Activated T-helper 2 cell treated with anti-CD3 and anti-CD28 coated beads, Interferon-gamma antibody, Interleukin-2, Interleukin-4, amounts not matched to agents 10 μg/mL and 5 μg/mL and 100 μg/mL, durations not matched to agents 14 hours and 24 hours and 36 hours (primary cell): ENCODE measurements at regions of chr5 and their contacts with region 1.

Region 1: GRCh38 chr5:40679155-40679913 is 381 bp upstream of the PTGER4 start:
- DNase-seq: peak; percentile 90
- H3K4me3 Mint-ChIP-seq: peak overlapping the region; percentile 99
- H3K27ac Mint-ChIP-seq: peak overlapping the region; percentile 98
- H3K4me1 Mint-ChIP-seq: peaks cover 51% of the 10 kb centered on the region
- H3K27me3 Mint-ChIP-seq: no peaks in the 10 kb centered on the region

Region 2: GRCh38 chr5:40277161-40277906 is 402.0 kb before region 1 on chr5:
- intact Hi-C with region 1: loop called (anchors 1 kb)
- DNase-seq: peak; percentile 22
- H3K4me3 Mint-ChIP-seq: peak overlapping the region; percentile 5
- H3K27ac Mint-ChIP-seq: peak overlapping the region; percentile 87
- H3K4me1 Mint-ChIP-seq: peaks cover 53% of the 10 kb centered on the region
- H3K27me3 Mint-ChIP-seq: no peaks in the 10 kb centered on the region

Region 3: GRCh38 chr5:40428126-40428525 is 251.2 kb before region 1 on chr5:
- intact Hi-C with region 1: loop called (anchors 2 kb)
- DNase-seq: no peak
- H3K4me3 Mint-ChIP-seq: no peak overlapping the region
- H3K27ac Mint-ChIP-seq: peak overlapping the region; percentile 76
- H3K4me1 Mint-ChIP-seq: peaks cover 49% of the 10 kb centered on the region
- H3K27me3 Mint-ChIP-seq: no peaks in the 10 kb centered on the region

Region 4: GRCh38 chr5:40578501-40579451 is 100.6 kb before region 1 on chr5:
- intact Hi-C with region 1: loop called (anchors 1 kb)
- DNase-seq: peak; percentile 19
- H3K4me3 Mint-ChIP-seq: peak overlapping the region; percentile 59
- H3K27ac Mint-ChIP-seq: peak overlapping the region; percentile 87
- H3K4me1 Mint-ChIP-seq: peaks cover 36% of the 10 kb centered on the region
- H3K27me3 Mint-ChIP-seq: no peaks in the 10 kb centered on the region

Region 5: DNA sequence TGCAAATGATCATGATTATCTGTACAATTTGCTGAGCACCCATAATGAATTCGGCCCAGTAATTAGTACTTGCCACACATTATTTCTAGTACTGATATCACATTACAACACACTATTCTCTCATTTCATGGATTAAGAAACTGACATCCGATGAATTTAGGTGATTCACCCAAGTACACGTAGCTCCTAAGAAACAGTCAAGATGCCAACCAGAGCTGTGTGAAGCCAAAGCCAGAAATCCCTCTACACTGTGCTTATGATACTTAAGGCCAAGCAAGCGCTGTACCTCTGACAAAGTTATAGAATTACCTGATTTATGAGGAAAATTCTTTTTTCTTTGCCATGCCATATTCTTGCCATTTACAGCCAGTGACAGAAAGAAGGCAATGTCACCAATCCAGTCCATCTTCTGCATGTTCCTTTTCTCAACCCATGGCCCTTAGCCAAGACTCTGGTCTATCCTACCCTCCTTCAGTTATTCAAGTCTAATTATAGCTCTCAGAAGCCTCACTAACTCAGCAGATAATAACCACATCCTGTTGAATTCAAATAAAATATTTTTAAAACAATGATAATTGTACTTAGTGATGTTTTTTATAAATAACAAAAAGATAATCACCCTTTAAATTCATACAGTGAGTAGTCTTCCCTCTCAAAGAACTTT is 73.9 kb before region 1 on chr5:
- intact Hi-C with region 1: no loop called
- DNase-seq: no peak
- H3K4me3 Mint-ChIP-seq: no peak overlapping the region
- H3K27ac Mint-ChIP-seq: no peak overlapping the region
- H3K4me1 Mint-ChIP-seq: peaks cover 32% of the 10 kb centered on the region
- H3K27me3 Mint-ChIP-seq: no peaks in the 10 kb centered on the region

Region 6: GRCh38 chr5:40652441-40653220 is 26.7 kb before region 1 on chr5:
- intact Hi-C with region 1: loop called (anchors 1 kb)
- DNase-seq: no peak
- H3K4me3 Mint-ChIP-seq: peak overlapping the region; percentile 83
- H3K27ac Mint-ChIP-seq: peak overlapping the region; percentile 72
- H3K4me1 Mint-ChIP-seq: peaks cover 75% of the 10 kb centered on the region
- H3K27me3 Mint-ChIP-seq: no peaks in the 10 kb centered on the region

Region 7: GRCh38 chr5:40791715-40792139 is 112.4 kb after region 1 on chr5:
- intact Hi-C with region 1: no loop called
- DNase-seq: no peak
- H3K4me3 Mint-ChIP-seq: no peak overlapping the region
- H3K27ac Mint-ChIP-seq: no peak overlapping the region
- H3K4me1 Mint-ChIP-seq: peaks cover 27% of the 10 kb centered on the region
- H3K27me3 Mint-ChIP-seq: no peaks in the 10 kb centered on the region